Dorsolateral prefrontal cortex (tissue), 120 donors: ENCODE measurements at regions of chr16 and their contacts with region 1.

Region 1: DNA sequence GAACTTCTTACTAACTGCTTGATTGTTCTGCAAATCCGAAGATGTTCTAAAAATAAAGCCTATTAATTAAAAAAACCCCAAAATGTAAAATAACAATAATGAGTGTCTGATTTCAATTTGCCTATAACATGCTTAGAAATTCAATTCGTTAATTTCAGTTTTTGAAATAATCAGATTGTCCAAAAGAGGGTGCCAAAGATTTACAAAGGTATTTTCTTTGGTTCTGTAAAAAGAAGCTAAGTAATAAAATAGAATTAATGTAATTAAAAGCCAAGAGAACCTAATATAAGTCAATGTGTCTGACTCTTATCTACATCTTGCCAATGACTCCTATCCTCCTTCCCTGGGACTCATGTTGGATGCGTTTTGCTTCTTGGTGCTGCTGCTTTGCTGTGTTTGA is 75.0 kb upstream of the CPHXL start:
- DNase-seq: no peak
- H3K4me3 ChIP-seq: no peak overlapping the region
- H3K27ac ChIP-seq: peak overlapping the region in 8 of 59 donors; percentile 1 to 60 (median 32)
- H3K27me3 ChIP-seq: no peaks in the 10 kb centered on the region
- CTCF ChIP-seq: peak in 54 of 56 donors; percentile 27 to 78 (median 58)

Region 2: DNA sequence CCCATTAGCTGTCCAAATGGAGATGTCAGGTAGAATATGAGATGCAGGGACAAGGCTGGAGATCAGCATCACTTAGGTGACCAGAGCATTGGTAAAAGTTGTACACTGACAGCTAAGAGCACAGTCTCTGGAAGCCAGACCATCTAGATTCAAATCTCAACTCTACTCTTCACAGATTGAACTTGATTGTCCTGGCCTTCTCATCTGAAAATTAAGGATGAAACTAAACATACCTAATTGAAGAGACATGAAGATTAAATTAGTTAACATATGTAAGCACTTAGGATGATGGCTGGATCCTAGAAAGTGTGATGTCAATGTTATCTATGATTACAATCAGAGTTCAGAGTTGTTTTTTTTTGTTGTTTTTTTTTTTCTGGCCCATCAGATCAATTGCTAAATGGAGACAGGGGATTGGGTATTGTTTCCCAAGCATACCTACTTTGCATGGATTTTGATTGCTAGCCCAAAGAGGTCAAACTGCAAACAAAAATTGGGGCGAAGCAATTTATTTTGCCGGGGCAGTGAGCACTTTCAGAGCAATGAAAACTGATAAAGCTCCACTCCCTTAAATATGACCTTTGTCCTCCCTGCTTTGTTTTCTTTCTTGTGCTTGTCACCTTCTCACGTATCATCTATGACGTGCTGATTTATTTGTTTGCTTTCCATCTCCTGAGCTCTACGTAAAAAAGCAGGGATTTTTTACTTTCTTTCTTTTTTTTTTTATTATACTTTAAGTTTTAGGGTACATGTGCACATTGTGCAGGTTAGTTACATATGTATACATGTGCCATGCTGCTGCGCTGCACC is 142.6 kb after region 1 on chr16:
- intact Hi-C with region 1: loop called in 1 of 2 experiments (anchors 10 kb)
- DNase-seq: no peak
- H3K4me3 ChIP-seq: no peak overlapping the region
- H3K27ac ChIP-seq: peak overlapping the region in 4 of 59 donors; percentile 0 to 14 (median 8)
- H3K27me3 ChIP-seq: no peaks in the 10 kb centered on the region
- CTCF ChIP-seq: no peak

Region 3: GRCh38 chr16:76059186-76059585 is 257.9 kb after region 1 on chr16:
- intact Hi-C with region 1: no loop called
- DNase-seq: peak in 2 of 10 donors; percentile 28 to 29
- H3K4me3 ChIP-seq: peak overlapping the region in 2 of 59 donors; percentile 8 to 15
- H3K27ac ChIP-seq: no peak overlapping the region
- H3K27me3 ChIP-seq: no peaks in the 10 kb centered on the region
- CTCF ChIP-seq: no peak

Region 4: GRCh38 chr16:76653390-76654026 is 852.2 kb after region 1 on chr16:
- intact Hi-C with region 1: loop called (anchors 5 to 10 kb)
- DNase-seq: peak in 3 of 10 donors; percentile 43 to 59 (median 47)
- H3K4me3 ChIP-seq: no peak overlapping the region
- H3K27ac ChIP-seq: peak overlapping the region in 6 of 59 donors; percentile 15 to 42 (median 26)
- H3K27me3 ChIP-seq: no peaks in the 10 kb centered on the region
- CTCF ChIP-seq: peak in 55 of 56 donors; percentile 35 to 85 (median 73)